Aorta (tissue), 5 donors: ENCODE measurements at regions of chr5 and their contacts with region 1.

Region 1: DNA sequence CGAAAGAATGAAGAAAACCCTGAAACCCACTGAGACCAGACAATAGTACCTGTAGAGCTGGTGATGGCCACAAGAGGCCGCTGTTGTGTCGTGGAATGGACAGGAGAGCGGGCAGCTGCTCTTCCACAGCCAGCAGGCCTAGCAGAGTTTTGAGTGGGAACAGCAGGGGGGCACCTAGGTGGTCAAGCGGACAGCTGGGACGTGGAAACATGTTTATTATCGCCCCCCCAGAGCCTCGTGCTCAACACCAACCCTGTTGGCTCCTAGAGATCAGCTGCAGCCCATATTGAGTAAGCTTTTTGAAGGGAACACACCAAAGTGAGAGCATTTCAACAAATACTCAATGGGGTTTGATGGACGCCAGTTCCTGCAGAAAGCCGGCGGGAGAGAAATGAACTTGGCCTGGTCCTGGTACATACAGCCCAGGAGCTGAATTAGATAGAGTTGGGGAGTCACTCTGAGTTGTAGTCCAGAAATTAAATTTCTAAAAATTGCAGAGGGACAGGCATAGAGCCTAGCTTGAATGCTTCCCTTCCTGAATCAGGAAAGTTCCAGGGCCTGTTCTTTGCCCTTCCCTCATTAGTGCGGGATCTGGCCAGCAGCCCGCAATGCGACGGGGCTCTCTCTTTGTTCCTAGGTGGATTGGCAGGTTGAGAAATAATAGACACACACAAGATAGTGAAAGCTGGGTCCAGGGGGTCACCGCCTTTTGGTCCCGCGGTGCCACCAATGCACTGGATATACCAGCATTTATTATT is 33.8 kb downstream of the MFAP3 start:
- DNase-seq: peak; percentile 88 to 95
- ATAC-seq: peak; percentile 95
- H3K4me3 ChIP-seq: no peak overlapping the region
- H3K27ac ChIP-seq: no peak overlapping the region
- H3K4me1 ChIP-seq: peaks cover 0 to 2% of the 10 kb centered on the region in 2 donors
- H3K27me3 ChIP-seq: no peaks in the 10 kb centered on the region

Region 2: DNA sequence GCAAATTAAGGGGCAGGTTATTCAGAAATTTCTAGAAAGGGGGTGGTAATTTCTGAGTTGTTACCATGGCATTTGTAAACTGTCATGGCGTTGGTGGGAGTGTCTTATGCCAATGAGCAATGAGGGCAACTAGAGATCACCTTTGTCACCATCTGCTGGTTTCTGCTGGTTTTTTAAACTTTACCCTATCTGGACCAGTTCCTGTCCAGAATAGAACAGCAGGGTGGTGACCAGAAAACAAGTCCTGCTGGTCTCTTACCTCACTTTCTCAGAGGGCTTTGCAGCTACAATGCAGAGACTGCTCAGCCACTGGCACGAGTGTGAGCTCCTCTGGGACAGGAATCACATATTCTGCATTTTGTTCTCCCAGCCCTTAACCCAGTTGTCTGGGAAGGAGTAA is 85.3 kb before region 1 on chr5:
- intact Hi-C with region 1: no loop called
- DNase-seq: no peak
- ATAC-seq: no peak
- H3K4me3 ChIP-seq: no peak overlapping the region
- H3K27ac ChIP-seq: no peak overlapping the region
- H3K4me1 ChIP-seq: no peaks in the 10 kb centered on the region
- H3K27me3 ChIP-seq: no peaks in the 10 kb centered on the region

Region 3: DNA sequence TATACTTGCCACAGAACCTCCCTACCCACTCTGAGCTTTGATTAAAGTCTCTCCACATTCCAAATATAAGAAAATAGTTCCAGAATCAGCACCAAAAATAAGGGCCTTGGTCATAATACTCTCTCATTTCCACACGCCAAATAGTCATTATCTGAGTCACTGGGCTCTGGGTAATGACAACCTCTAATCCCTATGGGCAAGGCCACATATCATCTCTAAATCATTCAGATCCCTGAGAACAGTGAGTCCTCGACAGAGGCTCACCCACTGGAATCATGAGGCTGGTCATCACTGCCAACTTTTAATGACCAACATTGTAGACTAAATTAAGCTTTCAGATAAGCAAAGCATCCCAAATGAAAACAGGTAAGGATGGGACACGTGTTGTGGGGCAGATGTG is 61.9 kb before region 1 on chr5:
- intact Hi-C with region 1: no loop called
- DNase-seq: no peak
- ATAC-seq: no peak
- H3K4me3 ChIP-seq: no peak overlapping the region
- H3K27ac ChIP-seq: no peak overlapping the region
- H3K4me1 ChIP-seq: no peaks in the 10 kb centered on the region
- H3K27me3 ChIP-seq: no peaks in the 10 kb centered on the region

Region 4: DNA sequence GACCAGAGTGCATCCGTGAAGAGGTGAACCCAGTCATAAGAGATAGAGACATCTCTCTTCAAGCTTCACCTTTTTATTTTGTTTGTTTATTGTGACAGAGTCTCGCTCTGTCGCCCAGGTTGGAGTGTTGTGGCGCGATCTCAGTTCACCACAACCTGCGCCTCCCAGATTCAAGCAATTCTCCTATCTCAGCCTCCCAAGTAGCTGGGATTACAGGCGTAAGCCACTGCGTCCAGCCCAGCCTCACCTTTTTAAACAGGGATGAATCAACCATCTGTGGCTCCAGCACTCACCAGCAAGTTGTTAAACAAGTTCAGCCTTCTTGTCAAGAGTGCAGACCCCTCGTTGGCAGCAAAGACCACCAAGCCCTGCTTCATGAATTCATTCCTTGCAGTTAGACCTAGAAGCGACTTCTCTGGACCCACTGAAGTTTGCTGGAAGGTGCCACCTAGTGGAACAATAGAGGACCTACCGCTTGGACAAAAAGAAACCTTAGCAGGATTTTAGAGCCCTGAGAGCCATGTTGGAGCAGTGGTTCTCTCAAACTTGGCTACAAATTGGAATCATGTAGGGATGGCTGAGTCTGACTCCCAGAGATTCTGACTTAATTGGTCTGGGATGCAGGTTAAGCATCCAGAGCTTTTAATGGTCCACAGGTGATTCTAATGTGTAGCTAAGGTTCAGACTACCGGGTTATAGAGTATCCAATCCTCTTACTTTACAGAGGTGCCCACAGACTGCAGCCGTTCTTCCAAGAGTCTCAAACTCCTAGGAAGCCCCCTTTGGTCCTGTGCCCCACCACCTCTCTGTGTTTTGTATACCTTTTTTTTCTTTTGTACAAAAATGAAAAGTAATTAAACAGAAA is 107.5 kb after region 1 on chr5:
- intact Hi-C with region 1: loop called (anchors 1 to 2 kb)
- DNase-seq: no peak
- ATAC-seq: peak; percentile 82
- H3K4me3 ChIP-seq: no peak overlapping the region
- H3K27ac ChIP-seq: no peak overlapping the region
- H3K4me1 ChIP-seq: no peaks in the 10 kb centered on the region
- H3K27me3 ChIP-seq: no peaks in the 10 kb centered on the region

Region 5: DNA sequence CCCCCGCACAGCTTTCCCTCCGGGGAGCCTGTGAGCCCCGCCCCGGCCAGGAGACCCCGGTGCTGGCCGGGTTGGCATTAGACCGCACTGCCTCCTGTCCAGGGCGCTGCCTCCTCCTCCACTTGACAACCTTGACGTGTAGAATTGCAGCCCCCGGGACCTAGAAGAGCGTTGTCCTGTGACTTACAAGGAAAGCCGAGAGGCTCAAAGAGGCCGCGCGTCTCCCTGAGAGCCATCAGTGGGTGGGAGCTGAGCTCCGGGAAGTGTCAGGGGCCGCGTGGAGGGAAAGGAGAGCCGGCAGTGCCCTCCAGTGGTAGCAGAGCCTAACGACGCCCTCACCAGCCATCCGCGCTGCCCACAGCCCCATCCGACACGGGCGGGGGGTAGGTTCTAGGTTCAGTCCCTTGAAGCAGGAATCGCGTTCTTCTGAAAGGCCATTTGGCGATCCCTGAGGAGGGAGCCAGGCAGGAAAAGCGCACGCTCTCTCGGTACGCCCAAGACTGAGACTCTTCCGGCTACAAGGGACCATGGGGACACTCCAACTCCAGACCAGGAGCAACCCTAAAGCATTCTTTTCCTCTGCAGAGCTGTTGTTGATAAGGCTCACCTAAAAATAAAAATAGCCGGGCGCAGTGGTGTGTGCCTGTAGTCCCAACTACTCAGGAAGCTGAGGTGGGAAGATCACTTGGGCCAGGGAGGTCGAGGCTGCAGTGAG is 332.6 kb after region 1 on chr5:
- intact Hi-C with region 1: loop called (anchors 2 kb)
- DNase-seq: peak; percentile 88 to 94
- ATAC-seq: peak; percentile 95
- H3K4me3 ChIP-seq: peak overlapping the region in 1 of 2 donors; percentile 8
- H3K27ac ChIP-seq: no peak overlapping the region
- H3K4me1 ChIP-seq: no peaks in the 10 kb centered on the region
- H3K27me3 ChIP-seq: no peaks in the 10 kb centered on the region